ENCODE measurements at regions of chr1 and their contacts with region 1.

Region 1: DNA sequence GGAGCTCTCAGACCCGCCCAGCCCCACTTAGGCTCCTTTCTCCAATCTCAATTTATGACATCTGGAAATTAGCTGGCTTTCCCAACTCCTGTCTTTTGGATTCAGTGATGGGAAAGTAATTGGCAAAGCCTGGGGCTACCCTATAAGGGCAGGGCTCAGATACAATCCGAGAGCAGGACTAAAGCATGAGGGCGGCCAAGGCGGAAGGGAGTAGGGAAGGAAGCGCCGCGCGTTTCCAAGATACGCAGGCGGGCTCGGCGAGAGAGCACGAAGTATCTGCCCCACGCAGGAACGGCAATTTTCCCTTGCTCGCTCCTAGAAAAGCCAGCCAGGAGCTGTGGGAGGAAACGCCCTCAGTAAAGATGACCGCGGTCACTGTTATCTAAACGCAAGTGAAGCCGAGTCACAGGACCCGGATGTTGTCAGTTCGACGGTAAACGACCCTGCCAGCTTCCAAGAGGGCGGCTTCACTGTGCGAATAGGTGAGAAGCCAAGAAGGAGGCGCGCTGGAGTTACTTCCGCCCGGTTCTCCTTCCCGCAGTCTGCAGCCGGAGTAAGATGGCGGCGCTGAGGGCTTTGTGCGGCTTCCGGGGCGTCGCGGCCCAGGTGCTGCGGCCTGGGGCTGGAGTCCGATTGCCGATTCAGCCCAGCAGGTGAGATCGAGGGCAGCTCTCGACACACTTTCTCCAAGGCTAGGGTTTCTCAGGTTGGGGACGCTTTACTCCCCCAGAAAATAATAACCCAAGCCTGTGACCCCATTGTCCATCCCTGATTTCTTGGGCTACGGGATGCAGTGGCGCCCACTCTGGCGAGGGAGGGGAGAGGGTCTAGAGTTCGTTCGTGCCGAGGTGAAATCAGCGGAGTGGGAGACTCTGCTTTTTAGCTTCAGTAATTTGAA is at the start of gene NDUFS2:
- H3K4me3 Mint-ChIP-seq: peak within 1 kb of the TSS; percentile 87
- H3K27ac Mint-ChIP-seq: peak within 1 kb of the TSS; percentile 95
- H3K4me1 Mint-ChIP-seq: peaks cover 73% of the 10 kb centered on the region
- H3K27me3 Mint-ChIP-seq: peaks cover 4% of the 10 kb centered on the region

Region 2: DNA sequence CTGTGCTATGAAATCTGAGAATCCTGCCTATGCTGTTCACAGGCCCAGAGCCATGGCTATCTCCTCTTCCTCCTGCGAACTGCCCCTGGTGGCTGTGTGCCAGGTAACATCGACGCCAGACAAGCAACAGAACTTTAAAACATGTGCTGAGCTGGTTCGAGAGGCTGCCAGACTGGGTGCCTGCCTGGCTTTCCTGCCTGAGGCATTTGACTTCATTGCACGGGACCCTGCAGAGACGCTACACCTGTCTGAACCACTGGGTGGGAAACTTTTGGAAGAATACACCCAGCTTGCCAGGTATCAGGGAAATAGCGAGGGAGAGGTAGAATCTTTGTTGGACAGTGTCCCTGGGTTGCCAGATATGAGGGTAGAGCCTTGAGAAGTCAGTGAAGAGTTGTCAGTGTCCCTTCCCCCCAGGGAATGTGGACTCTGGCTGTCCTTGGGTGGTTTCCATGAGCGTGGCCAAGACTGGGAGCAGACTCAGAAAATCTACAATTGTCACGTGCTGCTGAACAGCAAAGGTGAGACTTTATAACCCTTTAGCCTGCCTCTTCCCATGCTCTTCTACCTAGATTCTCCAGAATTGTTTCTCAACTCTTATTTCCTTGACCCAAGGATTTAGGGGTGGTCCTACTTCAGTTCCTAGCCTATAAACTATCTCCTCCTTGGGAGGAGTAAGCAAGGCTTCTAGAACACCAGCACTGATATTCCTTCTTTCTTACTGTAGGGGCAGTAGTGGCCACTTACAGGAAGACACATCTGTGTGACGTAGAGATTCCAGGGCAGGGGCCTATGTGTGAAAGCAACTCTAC is 82.8 kb before region 1 on chr1:
- intact Hi-C with region 1: no loop called
- H3K4me3 Mint-ChIP-seq: peak overlapping the region; percentile 89
- H3K27ac Mint-ChIP-seq: peak overlapping the region; percentile 97
- H3K4me1 Mint-ChIP-seq: peaks cover 86% of the 10 kb centered on the region
- H3K27me3 Mint-ChIP-seq: no peaks in the 10 kb centered on the region

Region 3: GRCh38 chr1:161215076-161215475 is 13.0 kb after region 1 on chr1 and contains the start of gene FCER1G:
- intact Hi-C with region 1: loop called (anchors 1 kb)
- H3K4me3 Mint-ChIP-seq: peak within 1 kb of the TSS; percentile 100
- H3K27ac Mint-ChIP-seq: peak within 1 kb of the TSS; percentile 98
- H3K4me1 Mint-ChIP-seq: peaks cover 63% of the 10 kb centered on the region
- H3K27me3 Mint-ChIP-seq: no peaks in the 10 kb centered on the region